ENCODE measurements at regions of chr3 and their contacts with region 1.

Region 1: DNA sequence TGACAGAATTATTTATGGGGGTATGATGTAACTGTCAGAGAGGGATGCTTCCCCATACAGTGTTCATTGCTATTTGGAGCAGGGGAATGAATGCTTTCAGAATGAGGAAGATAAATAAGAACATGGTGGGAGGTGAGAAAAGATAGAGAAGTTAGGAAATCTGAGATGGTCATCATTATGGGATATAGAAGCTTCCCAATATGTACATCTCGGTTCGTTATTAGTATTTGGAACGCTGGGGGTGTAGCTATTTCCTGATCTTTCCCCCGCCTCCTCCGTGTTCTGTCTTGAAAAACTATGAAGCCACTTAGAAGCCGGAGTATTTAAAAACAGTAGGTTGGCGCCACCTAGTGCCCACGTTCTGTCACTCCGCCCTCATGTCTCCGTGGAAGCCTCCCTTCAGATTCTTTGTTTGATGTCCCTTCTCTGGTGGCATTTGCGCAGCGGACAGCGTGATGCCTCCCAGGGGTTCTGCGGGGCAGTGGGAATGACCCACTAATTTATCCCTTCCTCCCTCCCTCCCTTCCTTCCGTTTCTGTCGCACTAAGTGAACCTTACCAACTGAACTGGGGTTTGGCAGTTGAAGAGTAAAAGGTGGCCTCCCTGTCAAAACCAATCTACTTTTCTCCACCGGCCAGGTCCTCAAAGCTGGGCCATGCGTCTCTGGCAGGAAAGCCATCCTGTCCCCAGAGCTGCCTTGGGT is 184.5 kb downstream of the FEZF2 start:
- DNase-seq: peak; percentile 70 to 84 (median 78)
- H3K4me3 ChIP-seq: no peak overlapping the region
- H3K27ac ChIP-seq: no peak overlapping the region
- H3K4me1 ChIP-seq: peaks cover 15% of the 10 kb centered on the region
- H3K27me3 ChIP-seq: no peaks in the 10 kb centered on the region
- CTCF ChIP-seq: peak; percentile 39 to 77 (median 61)
- EP300 ChIP-seq: no peak
- POLR2A ChIP-seq: no peak

Region 2: DNA sequence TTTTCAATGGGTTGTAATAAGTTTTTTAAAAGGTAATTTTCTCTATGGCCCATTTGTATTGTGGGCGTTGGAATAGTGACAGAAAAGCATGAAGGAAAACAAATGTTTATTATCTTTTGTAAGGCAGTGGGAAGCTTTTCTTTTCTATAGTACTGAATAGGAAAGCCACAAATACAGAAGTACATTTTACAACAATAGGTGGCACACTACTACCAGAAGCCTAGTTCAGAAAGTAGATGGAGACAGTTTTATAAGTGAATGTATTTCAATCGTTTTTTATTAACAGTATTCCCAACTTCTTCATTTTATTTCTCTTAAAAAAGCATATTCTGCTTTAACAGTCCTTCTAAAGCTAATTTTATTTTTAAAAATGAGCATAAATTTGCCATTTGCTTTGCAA is 330.8 kb before region 1 on chr3:
- intact Hi-C with region 1: loop called (anchors 5 to 10 kb)
- DNase-seq: no peak
- H3K4me3 ChIP-seq: no peak overlapping the region
- H3K27ac ChIP-seq: no peak overlapping the region
- H3K4me1 ChIP-seq: peaks cover 2% of the 10 kb centered on the region
- H3K27me3 ChIP-seq: no peaks in the 10 kb centered on the region
- CTCF ChIP-seq: no peak
- EP300 ChIP-seq: no peak
- POLR2A ChIP-seq: no peak

Region 3: DNA sequence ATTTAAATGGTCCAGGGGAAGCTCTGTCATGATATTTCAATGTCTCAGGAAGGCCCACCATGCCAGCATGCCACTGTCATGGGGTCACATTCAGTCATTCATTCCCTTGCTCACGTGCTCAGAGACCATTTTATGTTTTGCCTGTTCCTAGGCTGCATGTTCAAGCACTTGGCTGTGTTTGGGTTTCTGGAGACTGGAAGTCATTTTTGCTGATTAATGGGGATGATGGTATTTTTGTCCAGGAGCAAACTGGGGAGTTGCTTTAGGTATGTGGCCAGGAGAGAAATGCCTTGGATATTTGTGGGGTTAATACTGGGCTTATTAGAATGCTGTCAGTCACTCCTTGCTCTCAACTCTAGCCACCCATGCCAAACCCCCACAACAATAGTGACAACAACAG is 323.9 kb before region 1 on chr3:
- intact Hi-C with region 1: loop called in 1 of 4 experiments (anchors 10 kb)
- DNase-seq: no peak
- H3K4me3 ChIP-seq: no peak overlapping the region
- H3K27ac ChIP-seq: no peak overlapping the region
- H3K4me1 ChIP-seq: no peaks in the 10 kb centered on the region
- H3K27me3 ChIP-seq: no peaks in the 10 kb centered on the region
- CTCF ChIP-seq: no peak
- EP300 ChIP-seq: no peak
- POLR2A ChIP-seq: no peak

Region 4: GRCh38 chr3:62007036-62007818 is 181.6 kb before region 1 on chr3:
- intact Hi-C with region 1: no loop called
- DNase-seq: no peak
- H3K4me3 ChIP-seq: no peak overlapping the region
- H3K27ac ChIP-seq: no peak overlapping the region
- H3K4me1 ChIP-seq: no peaks in the 10 kb centered on the region
- H3K27me3 ChIP-seq: no peaks in the 10 kb centered on the region
- CTCF ChIP-seq: no peak
- EP300 ChIP-seq: no peak
- POLR2A ChIP-seq: no peak

Region 5: DNA sequence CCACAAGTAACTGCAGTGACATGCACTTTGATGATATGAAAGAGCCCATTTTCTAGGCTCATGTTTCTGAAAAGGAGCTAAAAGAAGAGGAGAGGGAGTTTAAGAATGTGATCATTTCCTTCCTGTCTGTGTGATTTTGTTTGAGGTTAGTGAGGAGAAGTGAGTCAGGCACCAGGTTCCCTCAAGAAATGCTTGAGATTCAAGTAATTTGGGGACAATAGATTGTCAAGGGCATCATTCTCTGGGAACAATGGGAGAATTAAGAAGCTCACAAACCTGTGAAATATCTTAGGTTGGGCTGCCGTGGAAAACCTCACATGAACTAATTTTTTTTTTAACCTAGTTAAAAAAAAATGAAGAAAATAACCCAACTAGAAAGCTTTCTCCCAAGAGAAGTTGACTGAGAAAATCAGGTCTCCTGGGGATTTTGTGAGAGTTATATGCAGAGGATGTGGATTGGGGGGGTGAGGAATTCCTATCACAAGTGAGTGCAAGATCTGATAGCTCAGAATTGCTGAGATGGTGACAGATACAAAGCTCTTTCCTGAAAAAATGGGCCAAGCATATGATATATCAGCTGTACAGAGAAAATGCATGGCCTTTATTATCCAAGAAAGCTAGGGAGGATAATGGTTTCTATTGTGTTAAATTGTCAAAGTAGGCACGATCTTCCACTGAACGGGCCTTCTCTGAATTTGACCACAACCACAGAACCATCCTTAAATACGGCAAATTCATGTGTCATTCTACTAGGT is 18.7 kb before region 1 on chr3:
- intact Hi-C with region 1: no loop called
- DNase-seq: no peak
- H3K4me3 ChIP-seq: no peak overlapping the region
- H3K27ac ChIP-seq: no peak overlapping the region
- H3K4me1 ChIP-seq: no peaks in the 10 kb centered on the region
- H3K27me3 ChIP-seq: no peaks in the 10 kb centered on the region
- CTCF ChIP-seq: no peak
- EP300 ChIP-seq: no peak
- POLR2A ChIP-seq: no peak

Measured in ovary (tissue), 10 donors.